ENCODE measurements at regions of chr20 and their contacts with region 1.

Region 1: GRCh38 chr20:3470627-3471396 is at the start of gene ATRN:
- DNase-seq: peak; percentile 95
- H3K4me3 ChIP-seq: peak within 1 kb of the TSS; percentile 87 to 98 (median 97)
- H3K27ac ChIP-seq: peak within 1 kb of the TSS; percentile 83 to 86 (median 84)
- H3K4me1 ChIP-seq: peaks cover 24 to 38% (median 32%) of the 10 kb centered on the region in 4 donors
- H3K27me3 ChIP-seq: no peaks in the 10 kb centered on the region
- CTCF ChIP-seq: no peak
- EP300 ChIP-seq: no peak
- POLR2A ChIP-seq: peak; percentile 15
- total RNA-seq, gene ATRN: 14.1 to 19.1 (median 18.0) TPM

Region 2: GRCh38 chr20:3407771-3408637 is 62.8 kb before region 1 on chr20:
- intact Hi-C with region 1: loop called (anchors 5 kb)
- DNase-seq: peak; percentile 94
- H3K4me3 ChIP-seq: peak overlapping the region; percentile 91 to 99 (median 96)
- H3K27ac ChIP-seq: peak overlapping the region; percentile 94 to 97 (median 95)
- H3K4me1 ChIP-seq: peaks cover 15 to 33% (median 31%) of the 10 kb centered on the region in 4 donors
- H3K27me3 ChIP-seq: no peaks in the 10 kb centered on the region
- CTCF ChIP-seq: no peak
- EP300 ChIP-seq: no peak
- POLR2A ChIP-seq: peak; percentile 11

Region 3: GRCh38 chr20:3572151-3572550 is 101.3 kb after region 1 on chr20:
- intact Hi-C with region 1: no loop called
- DNase-seq: no peak
- H3K4me3 ChIP-seq: no peak overlapping the region
- H3K27ac ChIP-seq: no peak overlapping the region
- H3K4me1 ChIP-seq: no peaks in the 10 kb centered on the region
- H3K27me3 ChIP-seq: no peaks in the 10 kb centered on the region
- CTCF ChIP-seq: no peak
- EP300 ChIP-seq: no peak
- POLR2A ChIP-seq: no peak

Region 4: DNA sequence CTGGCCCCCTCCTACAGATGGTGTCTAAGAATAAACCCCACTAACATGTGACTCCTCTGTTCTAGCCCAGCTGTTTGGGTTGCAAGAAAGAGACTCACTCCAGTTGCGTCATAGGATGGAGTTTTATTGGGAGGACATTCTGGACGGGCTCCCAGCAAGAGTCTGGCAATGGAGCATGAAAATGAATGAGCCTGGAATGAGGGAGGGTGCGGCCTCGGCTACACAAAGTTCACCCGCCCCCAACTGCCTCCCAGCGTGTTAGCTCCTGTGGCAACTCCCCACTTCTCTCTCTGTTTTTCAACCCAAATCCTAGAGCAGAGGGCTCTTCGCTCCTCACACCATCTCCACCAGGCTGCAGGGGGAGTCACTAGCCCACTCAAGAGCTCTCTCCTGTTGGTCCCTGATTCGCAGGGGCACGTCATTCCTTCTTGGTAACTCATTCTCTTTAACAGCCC is 216.1 kb after region 1 on chr20:
- intact Hi-C with region 1: no loop called
- DNase-seq: peak; percentile 95
- H3K4me3 ChIP-seq: peak overlapping the region in 1 of 4 donors; percentile 13
- H3K27ac ChIP-seq: peak overlapping the region; percentile 69 to 84 (median 73)
- H3K4me1 ChIP-seq: peaks cover 18 to 39% (median 30%) of the 10 kb centered on the region in 4 donors
- H3K27me3 ChIP-seq: peaks cover 0 to 5% (median 0%) of the 10 kb centered on the region in 4 donors
- CTCF ChIP-seq: no peak
- EP300 ChIP-seq: no peak
- POLR2A ChIP-seq: no peak